Right ventricle myocardium inferior (tissue), 1 donor: ENCODE measurements at regions of chr2 and their contacts with region 1.

Region 1: DNA sequence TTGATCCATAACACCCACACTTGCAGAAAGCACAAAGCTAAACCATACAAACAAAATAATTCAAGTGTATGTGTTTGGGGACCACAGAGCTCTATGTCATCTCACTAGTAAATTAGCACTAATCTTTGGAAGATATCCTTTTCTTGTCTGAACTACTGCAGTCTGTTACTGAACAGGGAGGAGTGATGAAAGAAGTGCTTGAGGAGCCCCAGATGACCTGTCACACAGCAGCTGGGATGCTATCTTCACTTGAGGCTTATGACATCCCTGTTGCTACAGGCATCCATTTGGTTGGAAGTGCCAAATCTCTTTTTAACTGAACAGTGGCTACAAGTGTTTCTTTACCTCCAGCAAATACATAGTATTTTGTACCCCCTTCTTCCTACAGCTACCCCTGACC is 386.3 kb upstream of the CHAC2 start:
- DNase-seq: no peak
- ATAC-seq: peak; percentile 96

Region 2: DNA sequence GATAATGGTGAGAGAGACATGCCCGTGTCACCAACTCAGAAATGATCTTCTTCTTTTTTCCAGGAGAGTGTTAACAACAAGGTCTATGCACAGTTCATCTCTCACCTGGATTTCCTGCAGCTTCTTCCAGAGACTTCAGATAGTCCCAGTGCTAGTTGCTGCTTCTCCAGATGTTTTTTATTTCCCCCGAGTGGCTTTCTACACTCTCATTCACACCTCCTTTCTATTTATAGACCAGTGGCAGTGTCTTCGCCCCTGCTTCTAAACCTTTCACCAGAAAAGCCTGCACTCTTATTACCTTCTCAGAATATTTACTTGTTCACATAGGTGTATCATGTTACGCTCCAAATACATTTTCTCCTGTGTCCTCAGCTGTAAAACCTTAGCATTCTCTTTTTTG is 172.5 kb before region 1 on chr2:
- intact Hi-C with region 1: loop called (anchors 5 kb)
- DNase-seq: no peak
- ATAC-seq: peak; percentile 50

Region 3: DNA sequence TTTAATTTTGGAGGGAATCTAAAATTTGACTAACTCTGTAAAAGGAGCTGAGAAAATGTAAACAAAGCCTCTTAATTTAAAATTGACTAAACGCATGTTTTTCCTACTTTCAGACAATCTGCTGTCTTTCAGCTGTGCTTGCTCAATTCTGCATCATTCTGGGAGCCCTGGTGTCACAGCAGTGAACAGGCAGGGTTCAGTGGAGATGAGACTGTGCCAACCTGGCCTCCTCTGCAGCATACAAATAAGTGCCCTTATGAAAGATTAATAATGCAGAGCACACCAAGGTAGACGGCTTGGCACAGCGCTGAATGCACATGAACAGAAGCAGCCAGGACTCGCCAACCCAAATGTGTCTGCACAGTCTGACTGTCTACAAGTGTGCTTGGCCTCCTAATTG is 164.3 kb after region 1 on chr2:
- intact Hi-C with region 1: loop called (anchors 5 kb)
- DNase-seq: no peak
- ATAC-seq: no peak